ENCODE measurements at regions of chr2 and their contacts with region 1.

Region 1: GRCh38 chr2:229800997-229801754 is 86.8 kb upstream of the DNER start:
- DNase-seq: peak; percentile 33 to 76 (median 66)
- ATAC-seq: peak; percentile 70
- H3K4me3 ChIP-seq: no peak overlapping the region
- H3K4me3 Mint-ChIP-seq: no peak overlapping the region
- H3K27ac ChIP-seq: no peak overlapping the region
- H3K27ac Mint-ChIP-seq: peak overlapping the region in 6 of 9 donors; percentile 13 to 65 (median 40)
- H3K4me1 ChIP-seq: no peaks in the 10 kb centered on the region
- H3K4me1 Mint-ChIP-seq: peaks cover 0 to 6% (median 0%) of the 10 kb centered on the region in 7 donors
- H3K27me3 ChIP-seq: no peaks in the 10 kb centered on the region
- H3K27me3 Mint-ChIP-seq: no peaks in the 10 kb centered on the region

Region 2: DNA sequence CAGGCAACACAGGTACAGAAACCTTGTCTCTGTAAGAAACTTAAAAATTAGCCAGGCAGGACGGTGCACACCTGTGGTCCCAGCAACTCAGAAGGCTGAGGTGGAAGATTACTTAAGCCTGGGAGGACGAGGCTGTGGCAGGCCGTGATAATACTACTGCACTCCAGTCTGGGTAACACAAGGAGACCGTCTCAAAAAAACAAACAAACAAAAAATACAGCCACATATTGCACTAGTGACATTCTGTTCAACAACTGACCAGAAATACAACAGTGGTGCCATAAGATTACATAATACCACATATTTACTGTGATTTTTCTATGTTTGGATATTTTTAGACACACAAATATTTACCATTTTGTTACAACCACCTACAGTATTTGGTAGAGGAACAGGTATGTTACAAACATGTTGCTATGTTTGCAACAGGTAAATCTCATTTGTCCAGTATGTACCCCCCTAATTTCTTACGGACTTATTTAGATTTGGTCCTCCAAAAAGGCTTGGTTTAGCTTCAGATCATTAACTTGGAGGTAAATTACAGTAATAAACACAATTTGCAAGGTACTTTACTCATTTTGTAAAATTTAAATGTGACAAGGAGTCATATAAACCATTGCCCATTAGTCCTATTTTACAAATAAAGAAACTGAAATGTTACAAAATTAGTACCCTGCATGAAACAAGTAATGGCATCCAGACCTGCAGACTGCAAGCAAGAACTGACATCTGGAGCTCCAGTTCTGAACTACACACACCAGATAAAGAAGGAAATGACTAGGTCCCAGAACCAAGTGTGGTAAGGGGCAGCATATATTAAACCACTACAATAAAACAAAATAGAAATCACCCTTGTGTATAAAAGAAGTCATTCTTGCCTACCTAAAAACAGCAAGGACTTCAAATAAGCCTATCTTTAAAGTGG is 83.9 kb after region 1 on chr2:
- CTCF ChIA-PET with region 1: interaction called, 4 read pairs
- POLR2A ChIA-PET with region 1: no interaction called
- intact Hi-C with region 1: loop called in 1 of 2 experiments (anchors 1 kb)
- DNase-seq: peak in 1 of 9 donors; percentile 12
- ATAC-seq: no peak
- H3K4me3 ChIP-seq: no peak overlapping the region
- H3K4me3 Mint-ChIP-seq: no peak overlapping the region
- H3K27ac ChIP-seq: no peak overlapping the region
- H3K27ac Mint-ChIP-seq: peak overlapping the region in 5 of 9 donors; percentile 1 to 78 (median 37)
- H3K4me1 ChIP-seq: no peaks in the 10 kb centered on the region
- H3K4me1 Mint-ChIP-seq: peaks cover 13 to 73% (median 63%) of the 10 kb centered on the region in 7 donors
- H3K27me3 ChIP-seq: no peaks in the 10 kb centered on the region
- H3K27me3 Mint-ChIP-seq: no peaks in the 10 kb centered on the region

Region 3: GRCh38 chr2:230007931-230008707 is 206.9 kb after region 1 on chr2:
- CTCF ChIA-PET with region 1: no interaction called
- POLR2A ChIA-PET with region 1: no interaction called
- intact Hi-C with region 1: loop called in 1 of 2 experiments (anchors 1 kb)
- DNase-seq: peak; percentile 53 to 83 (median 72)
- ATAC-seq: peak; percentile 80
- H3K4me3 ChIP-seq: no peak overlapping the region
- H3K4me3 Mint-ChIP-seq: peak overlapping the region in 9 of 10 donors; percentile 25 to 71 (median 62)
- H3K27ac ChIP-seq: no peak overlapping the region
- H3K27ac Mint-ChIP-seq: peak overlapping the region in 1 of 9 donors; percentile 0
- H3K4me1 ChIP-seq: no peaks in the 10 kb centered on the region
- H3K4me1 Mint-ChIP-seq: peaks cover 5 to 11% (median 7%) of the 10 kb centered on the region in 7 donors
- H3K27me3 ChIP-seq: no peaks in the 10 kb centered on the region
- H3K27me3 Mint-ChIP-seq: no peaks in the 10 kb centered on the region

Region 4: GRCh38 chr2:230160112-230160660 is 359.0 kb after region 1 on chr2:
- CTCF ChIA-PET with region 1: interaction called, 5 read pairs
- POLR2A ChIA-PET with region 1: no interaction called
- intact Hi-C with region 1: loop called in 1 of 2 experiments (anchors 1 kb)
- DNase-seq: peak; percentile 15 to 60 (median 52)
- ATAC-seq: peak; percentile 82
- H3K4me3 ChIP-seq: no peak overlapping the region
- H3K4me3 Mint-ChIP-seq: peak overlapping the region in 7 of 10 donors; percentile 35 to 68 (median 44)
- H3K27ac ChIP-seq: no peak overlapping the region
- H3K27ac Mint-ChIP-seq: peak overlapping the region in 2 of 9 donors; percentile 33 to 34
- H3K4me1 ChIP-seq: no peaks in the 10 kb centered on the region
- H3K4me1 Mint-ChIP-seq: peaks cover 6 to 11% (median 6%) of the 10 kb centered on the region in 7 donors
- H3K27me3 ChIP-seq: no peaks in the 10 kb centered on the region
- H3K27me3 Mint-ChIP-seq: no peaks in the 10 kb centered on the region